Natural killer cell (primary cell): ENCODE measurements at regions of chr4 and their contacts with region 1.

Region 1: GRCh38 chr4:46931981-46932380 is 22.9 kb upstream of the COX7B2 start:
- DNase-seq: peak in 1 of 2 donors; percentile 11
- ATAC-seq: peak in 2 of 3 donors; percentile 31 to 78
- H3K4me3 ChIP-seq: no peak overlapping the region
- H3K4me3 Mint-ChIP-seq: no peak overlapping the region
- H3K27ac ChIP-seq: no peak overlapping the region
- H3K27ac Mint-ChIP-seq: no peak overlapping the region
- H3K4me1 ChIP-seq: no peaks in the 10 kb centered on the region
- H3K4me1 Mint-ChIP-seq: no peaks in the 10 kb centered on the region
- H3K27me3 ChIP-seq: no peaks in the 10 kb centered on the region
- H3K27me3 Mint-ChIP-seq: peaks cover 11 to 43% of the 10 kb centered on the region in 2 donors
- CTCF ChIP-seq: peak; percentile 49

Region 2: GRCh38 chr4:46958742-46959488 is 26.9 kb after region 1 on chr4:
- intact Hi-C with region 1: no loop called
- DNase-seq: no peak
- ATAC-seq: no peak
- H3K4me3 ChIP-seq: no peak overlapping the region
- H3K4me3 Mint-ChIP-seq: no peak overlapping the region
- H3K27ac ChIP-seq: no peak overlapping the region
- H3K27ac Mint-ChIP-seq: no peak overlapping the region
- H3K4me1 ChIP-seq: no peaks in the 10 kb centered on the region
- H3K4me1 Mint-ChIP-seq: no peaks in the 10 kb centered on the region
- H3K27me3 ChIP-seq: no peaks in the 10 kb centered on the region
- H3K27me3 Mint-ChIP-seq: peaks cover 6 to 22% of the 10 kb centered on the region in 2 donors
- CTCF ChIP-seq: no peak

Region 3: DNA sequence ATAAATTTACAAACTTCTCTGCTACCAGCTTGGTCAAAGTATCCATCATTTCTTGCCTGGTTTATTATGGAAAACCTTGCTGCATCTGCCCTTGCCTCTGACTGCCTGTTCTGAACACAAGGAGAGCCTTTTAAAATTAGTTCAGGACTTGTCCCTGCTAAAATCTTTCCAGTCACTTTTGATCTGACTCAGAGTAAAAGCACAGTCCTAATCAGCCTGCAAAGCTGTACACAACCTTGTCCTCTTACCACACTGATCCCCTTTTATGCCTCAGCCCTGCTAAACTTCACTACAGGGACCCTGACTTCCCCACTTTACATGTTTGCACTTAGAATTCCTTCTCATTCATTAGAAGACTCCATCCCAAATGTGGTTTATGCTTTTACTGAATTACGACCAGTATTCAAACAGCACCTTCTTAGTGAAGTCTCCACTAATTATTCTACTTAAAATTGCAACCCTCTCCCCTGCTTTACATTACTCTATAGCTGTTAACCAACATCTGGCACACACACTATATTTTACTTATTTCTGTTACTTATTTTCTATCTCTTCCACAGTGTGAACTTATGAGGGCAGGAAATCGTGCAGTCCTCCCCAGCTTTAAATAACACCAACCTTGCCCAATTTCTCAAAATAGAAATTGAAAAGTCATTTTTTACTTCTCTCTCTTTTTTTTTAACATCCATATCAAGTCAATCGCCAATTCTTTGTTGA is 55.1 kb after region 1 on chr4:
- intact Hi-C with region 1: no loop called
- DNase-seq: no peak
- ATAC-seq: no peak
- H3K4me3 ChIP-seq: no peak overlapping the region
- H3K4me3 Mint-ChIP-seq: no peak overlapping the region
- H3K27ac ChIP-seq: no peak overlapping the region
- H3K27ac Mint-ChIP-seq: no peak overlapping the region
- H3K4me1 ChIP-seq: no peaks in the 10 kb centered on the region
- H3K4me1 Mint-ChIP-seq: peaks cover 1 to 2% of the 10 kb centered on the region in 2 donors
- H3K27me3 ChIP-seq: peaks cover 11% of the 10 kb centered on the region
- H3K27me3 Mint-ChIP-seq: peaks cover 6 to 19% of the 10 kb centered on the region in 2 donors
- CTCF ChIP-seq: no peak

Region 4: GRCh38 chr4:47032415-47033106 is 100.6 kb after region 1 on chr4:
- intact Hi-C with region 1: loop called (anchors 1 kb)
- DNase-seq: peak; percentile 31 to 51
- ATAC-seq: peak; percentile 76 to 93 (median 88)
- H3K4me3 ChIP-seq: peak overlapping the region; percentile 13
- H3K4me3 Mint-ChIP-seq: peak overlapping the region; percentile 70
- H3K27ac ChIP-seq: no peak overlapping the region
- H3K27ac Mint-ChIP-seq: peak overlapping the region in 1 of 2 donors; percentile 39
- H3K4me1 ChIP-seq: peaks cover 21% of the 10 kb centered on the region
- H3K4me1 Mint-ChIP-seq: peaks cover 19 to 20% of the 10 kb centered on the region in 2 donors
- H3K27me3 ChIP-seq: peaks cover 38% of the 10 kb centered on the region
- H3K27me3 Mint-ChIP-seq: peaks cover 29 to 70% of the 10 kb centered on the region in 2 donors
- CTCF ChIP-seq: peak; percentile 56

Region 5: GRCh38 chr4:47122592-47123291 is 190.8 kb after region 1 on chr4:
- intact Hi-C with region 1: loop called (anchors 2 kb)
- DNase-seq: peak; percentile 18 to 61
- ATAC-seq: peak; percentile 60 to 73 (median 66)
- H3K4me3 ChIP-seq: no peak overlapping the region
- H3K4me3 Mint-ChIP-seq: no peak overlapping the region
- H3K27ac ChIP-seq: no peak overlapping the region
- H3K27ac Mint-ChIP-seq: no peak overlapping the region
- H3K4me1 ChIP-seq: no peaks in the 10 kb centered on the region
- H3K4me1 Mint-ChIP-seq: peaks cover 0 to 5% of the 10 kb centered on the region in 2 donors
- H3K27me3 ChIP-seq: no peaks in the 10 kb centered on the region
- H3K27me3 Mint-ChIP-seq: no peaks in the 10 kb centered on the region
- CTCF ChIP-seq: peak; percentile 81

Region 6: GRCh38 chr4:47451657-47452056 is 519.7 kb after region 1 on chr4:
- intact Hi-C with region 1: no loop called
- DNase-seq: no peak
- ATAC-seq: no peak
- H3K4me3 ChIP-seq: no peak overlapping the region
- H3K4me3 Mint-ChIP-seq: no peak overlapping the region
- H3K27ac ChIP-seq: no peak overlapping the region
- H3K27ac Mint-ChIP-seq: no peak overlapping the region
- H3K4me1 ChIP-seq: no peaks in the 10 kb centered on the region
- H3K4me1 Mint-ChIP-seq: peaks cover 5 to 9% of the 10 kb centered on the region in 2 donors
- H3K27me3 ChIP-seq: no peaks in the 10 kb centered on the region
- H3K27me3 Mint-ChIP-seq: no peaks in the 10 kb centered on the region
- CTCF ChIP-seq: no peak